ENCODE measurements at regions of chr20 and their contacts with region 1.

Region 1: DNA sequence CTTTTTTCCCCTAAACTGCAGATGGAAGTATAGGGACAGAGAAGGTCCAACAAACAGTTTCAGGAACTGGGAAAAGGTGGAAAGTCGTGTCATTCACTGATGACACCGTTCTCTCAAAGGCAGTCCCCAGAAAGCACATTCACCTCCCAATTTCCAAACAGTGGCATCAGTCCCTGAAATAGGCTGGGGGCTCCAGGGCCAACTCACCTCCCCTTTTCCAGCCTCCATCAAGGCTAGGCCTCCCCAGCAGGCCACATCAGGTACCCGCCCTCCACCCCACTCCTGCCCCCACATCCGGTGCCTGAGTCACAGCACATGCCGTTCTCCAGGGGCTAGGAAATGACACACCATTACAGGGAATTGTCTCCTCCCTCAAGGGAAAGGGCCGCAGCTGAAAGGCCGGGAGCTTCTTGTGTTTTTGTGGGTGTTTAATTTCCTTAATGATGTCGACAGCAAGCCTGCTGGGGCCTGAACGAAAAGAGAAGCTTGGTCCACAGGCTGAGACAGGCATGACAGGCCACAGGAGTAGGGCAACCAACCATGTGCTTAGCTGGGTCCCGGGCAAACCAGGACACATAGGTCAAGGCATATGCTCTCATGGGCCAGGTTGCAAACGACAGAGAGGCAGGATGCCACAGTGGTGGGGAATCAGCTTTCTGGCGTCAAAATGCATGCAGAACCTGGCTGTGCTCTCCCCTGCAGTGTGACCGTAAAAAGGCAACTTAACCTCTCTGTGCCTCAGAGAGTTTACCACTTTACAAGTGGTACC is 39.2 kb downstream of the ZMYND8 start:
- DNase-seq: peak; percentile 68 to 96
- H3K4me3 ChIP-seq: peak overlapping the region in 1 of 2 donors; percentile 15
- H3K27ac ChIP-seq: peak overlapping the region; percentile 97 to 99
- H3K4me1 ChIP-seq: peaks cover 31 to 52% of the 10 kb centered on the region in 2 donors
- H3K27me3 ChIP-seq: no peaks in the 10 kb centered on the region
- CTCF ChIP-seq: no peak

Region 2: GRCh38 chr20:46872328-46873211 is 444.7 kb before region 1 on chr20:
- intact Hi-C with region 1: no loop called
- DNase-seq: no peak
- H3K4me3 ChIP-seq: no peak overlapping the region
- H3K27ac ChIP-seq: no peak overlapping the region
- H3K4me1 ChIP-seq: no peaks in the 10 kb centered on the region
- H3K27me3 ChIP-seq: no peaks in the 10 kb centered on the region
- CTCF ChIP-seq: no peak

Region 3: DNA sequence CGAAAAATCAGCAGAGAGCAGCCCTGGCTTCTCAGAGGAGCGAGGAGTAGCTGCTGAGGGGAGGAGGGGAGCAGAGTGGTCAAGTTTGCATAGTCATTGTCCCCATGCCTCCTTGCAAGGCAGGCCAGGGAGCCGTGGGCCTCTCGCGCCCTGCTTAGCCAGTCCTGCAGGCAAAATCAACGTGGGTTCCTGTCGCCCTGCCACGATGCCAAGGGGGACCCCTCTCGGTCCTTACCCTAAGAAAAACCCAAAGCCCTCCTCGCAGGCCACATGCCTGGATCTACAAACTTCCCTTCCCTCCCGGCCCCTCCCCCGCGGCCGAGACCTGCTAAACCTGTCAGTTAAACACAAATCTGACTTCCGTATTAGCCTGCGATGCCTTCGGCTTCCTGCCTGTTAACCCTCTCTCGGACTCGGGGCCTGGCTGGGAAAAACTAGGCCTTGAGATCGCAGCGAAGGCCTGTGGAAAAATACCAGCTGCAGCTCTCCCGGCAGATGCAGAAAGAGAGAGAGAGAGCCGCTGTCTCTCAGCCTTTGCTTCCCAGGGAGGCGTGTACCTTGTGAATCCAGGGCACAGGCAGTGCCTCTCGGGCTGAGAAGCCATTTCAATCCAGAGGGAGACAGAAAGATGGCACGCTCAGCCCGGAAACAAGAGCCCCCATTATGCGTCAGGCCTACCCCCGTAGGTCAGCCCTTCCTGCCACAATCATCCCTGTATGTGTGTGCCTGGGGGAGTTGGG is 40.2 kb after region 1 on chr20:
- intact Hi-C with region 1: loop called (anchors 1 kb)
- DNase-seq: peak; percentile 19 to 89
- H3K4me3 ChIP-seq: peak overlapping the region in 1 of 2 donors; percentile 8
- H3K27ac ChIP-seq: peak overlapping the region; percentile 95 to 99
- H3K4me1 ChIP-seq: peaks cover 51 to 91% of the 10 kb centered on the region in 2 donors
- H3K27me3 ChIP-seq: no peaks in the 10 kb centered on the region
- CTCF ChIP-seq: no peak

Measured in ascending aorta (tissue), 2 donors.